Activated T-helper 1 cell treated with anti-CD3 and anti-CD28 coated beads, Interleukin-12 subunit alpha, Interleukin-12 subunit beta, Interleukin-2, Interleukin-4 antibody, amounts not matched to agents 30 ng/mL and 10 ng/mL and 1 ng/mL, durations not matched to agents 14 hours and 24 hours and 36 hours (primary cell): ENCODE measurements at regions of chr1 and their contacts with region 1.

Region 1: DNA sequence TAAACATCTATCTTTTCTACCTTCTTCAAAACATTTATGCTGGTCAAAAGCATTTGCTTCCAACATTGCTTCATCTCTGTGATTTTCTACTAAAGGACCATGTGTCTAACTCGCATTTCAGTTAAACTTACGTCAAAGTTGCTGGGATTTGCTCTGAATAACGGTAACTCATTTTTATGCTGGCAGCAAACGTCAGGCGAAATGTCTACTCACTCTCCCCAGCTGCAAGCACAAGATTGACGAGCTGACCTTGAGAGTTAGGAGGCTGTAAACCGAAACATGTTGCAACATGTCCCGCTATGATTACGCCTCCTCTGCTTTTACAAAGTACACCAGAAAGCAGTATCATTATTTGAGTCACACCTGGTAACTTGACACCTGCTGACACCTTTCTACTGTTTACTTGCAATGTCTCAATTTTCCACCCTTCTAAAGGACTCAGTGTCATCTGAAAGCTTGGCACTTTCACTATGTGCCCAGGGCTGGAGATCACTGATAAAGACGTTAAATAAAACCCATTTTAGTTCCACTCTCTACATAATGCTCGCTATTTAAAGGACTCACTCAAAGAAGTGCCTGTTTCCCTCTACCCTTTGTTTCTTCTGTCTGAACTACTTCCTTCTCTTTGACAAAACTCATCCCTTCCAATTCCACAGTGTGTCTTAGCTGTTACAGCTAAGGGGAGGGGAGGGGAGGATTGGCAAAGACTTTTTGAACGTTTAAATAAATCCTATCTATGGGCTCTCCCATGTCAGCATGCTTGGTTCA is 111.9 kb downstream of the PTPN14 start:
- DNase-seq: peak; percentile 52
- H3K4me3 Mint-ChIP-seq: peak overlapping the region; percentile 66
- H3K27ac Mint-ChIP-seq: peak overlapping the region; percentile 95
- H3K4me1 Mint-ChIP-seq: peaks cover 64% of the 10 kb centered on the region
- H3K27me3 Mint-ChIP-seq: no peaks in the 10 kb centered on the region

Region 2: DNA sequence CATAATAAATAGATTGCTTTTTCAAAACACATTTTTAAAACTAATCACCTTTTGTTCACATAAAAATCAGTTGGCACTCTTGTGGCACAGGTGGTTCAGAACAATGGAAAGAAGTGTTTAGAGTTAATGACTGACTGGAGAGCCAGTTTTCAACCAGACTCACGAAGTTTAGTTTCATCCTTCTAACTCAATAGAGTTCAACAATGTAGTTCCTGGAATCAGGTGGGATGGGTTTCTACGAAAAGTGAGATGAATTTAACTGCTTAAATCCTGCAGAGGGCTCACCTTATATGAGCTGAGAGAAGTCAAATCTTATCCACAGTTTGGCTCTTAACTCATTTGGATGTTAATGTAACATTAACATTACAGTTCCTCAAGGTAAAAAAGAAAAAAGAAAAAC is 42.0 kb before region 1 on chr1:
- intact Hi-C with region 1: loop called (anchors 2 kb)
- DNase-seq: no peak
- H3K4me3 Mint-ChIP-seq: no peak overlapping the region
- H3K27ac Mint-ChIP-seq: peak overlapping the region; percentile 68
- H3K4me1 Mint-ChIP-seq: peaks cover 44% of the 10 kb centered on the region
- H3K27me3 Mint-ChIP-seq: no peaks in the 10 kb centered on the region